ENCODE measurements at regions of chr1 and their contacts with region 1.

Region 1: DNA sequence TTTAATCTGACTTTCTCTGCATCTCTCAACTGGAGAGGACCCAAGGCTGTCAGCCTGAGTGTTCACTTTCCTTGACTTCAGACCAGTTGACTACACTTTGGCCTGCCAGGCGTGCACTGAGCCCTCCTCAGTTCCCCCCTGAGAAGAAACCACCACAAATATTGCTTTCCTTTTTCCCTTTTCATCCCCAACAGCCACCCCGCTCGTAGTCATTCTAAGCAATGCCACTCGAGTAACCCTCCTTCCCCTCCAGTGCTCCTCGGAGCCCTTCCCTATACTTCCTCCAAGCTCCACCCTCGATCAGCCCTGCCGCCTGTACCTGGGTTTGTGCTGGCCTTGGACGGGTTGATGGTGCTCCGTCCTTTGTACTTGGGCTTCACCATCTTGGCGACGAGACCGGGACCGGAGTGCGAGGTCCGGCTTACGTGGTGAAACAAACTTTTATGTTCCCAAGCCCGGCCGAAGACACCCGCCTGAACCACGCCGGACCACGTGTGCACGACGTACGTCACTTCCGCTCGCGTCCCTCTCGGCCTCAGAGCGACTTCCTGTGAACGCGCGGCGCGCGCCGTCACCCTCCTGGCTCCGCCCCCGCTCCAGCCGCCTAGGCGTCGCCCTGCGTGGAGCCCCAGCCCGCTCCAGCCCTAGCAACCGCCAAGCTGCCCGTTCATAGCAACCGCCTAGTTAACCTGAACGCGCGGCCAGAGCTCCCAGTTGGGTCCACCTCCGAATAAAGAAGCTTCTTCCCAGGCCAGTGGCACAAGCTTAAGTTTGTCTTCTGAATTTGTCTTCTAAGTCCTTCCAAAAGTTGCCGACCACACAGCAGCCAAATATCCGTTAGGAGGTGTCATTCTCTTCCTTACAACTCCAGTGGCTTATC is at the start of gene GNL2:
- DNase-seq: peak; percentile 97
- H3K4me3 Mint-ChIP-seq: peak within 1 kb of the TSS; percentile 99
- H3K27ac Mint-ChIP-seq: peak within 1 kb of the TSS; percentile 92
- H3K4me1 Mint-ChIP-seq: peaks cover 22% of the 10 kb centered on the region
- H3K27me3 Mint-ChIP-seq: peaks cover 3% of the 10 kb centered on the region
- total RNA-seq, gene GNL2: 95.6 and 98.0 TPM in 2 replicates

Region 2: DNA sequence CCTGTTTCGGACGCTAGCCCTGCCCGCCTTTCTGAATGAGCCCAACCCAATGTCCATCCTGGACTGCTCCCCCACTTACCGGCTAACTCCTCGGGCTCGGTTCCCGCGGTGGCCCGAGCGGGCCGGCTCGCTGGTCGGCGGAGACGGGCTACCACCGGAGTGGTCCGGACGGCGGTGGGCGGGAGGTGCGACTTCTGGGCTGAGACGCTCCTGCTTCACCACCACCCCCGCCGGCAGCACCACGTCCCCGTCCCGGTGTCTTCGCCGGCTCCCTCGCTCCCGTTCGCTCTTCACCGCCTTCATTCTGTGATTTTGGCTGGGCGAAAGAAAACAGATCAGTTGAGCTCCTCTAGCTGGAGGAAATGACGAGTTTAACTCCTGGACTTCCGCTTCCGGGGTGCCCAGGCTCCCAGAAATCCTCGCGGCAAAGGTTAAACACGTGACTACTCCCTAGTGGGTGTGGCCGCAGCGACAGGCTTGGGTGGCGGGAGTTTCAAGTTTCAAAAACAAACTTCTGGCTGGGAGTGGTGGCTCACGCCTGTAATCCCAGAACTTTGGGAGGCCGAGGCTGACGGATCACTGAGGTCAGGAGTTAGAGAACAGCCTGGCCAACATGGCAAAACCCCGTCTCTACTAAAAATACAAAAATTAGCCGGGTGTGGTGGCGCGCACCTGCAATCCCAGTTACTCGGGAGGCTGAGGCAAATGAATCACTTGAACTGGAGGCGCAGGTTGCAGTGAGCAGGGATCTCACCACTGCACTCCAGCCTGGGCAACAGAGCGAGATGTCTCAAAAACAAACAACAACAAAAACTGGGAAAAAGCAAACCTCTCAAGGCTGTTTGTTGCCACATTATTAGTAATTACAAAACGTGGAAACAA is 41.5 kb before region 1 on chr1 and contains the start of gene SNIP1:
- intact Hi-C with region 1: loop called (anchors 1 kb)
- DNase-seq: peak; percentile 89
- H3K4me3 Mint-ChIP-seq: peak within 1 kb of the TSS; percentile 98
- H3K27ac Mint-ChIP-seq: peak within 1 kb of the TSS; percentile 93
- H3K4me1 Mint-ChIP-seq: peaks cover 41% of the 10 kb centered on the region
- H3K27me3 Mint-ChIP-seq: no peaks in the 10 kb centered on the region
- total RNA-seq, gene SNIP1: 26.1 and 27.8 TPM in 2 replicates

Region 3: DNA sequence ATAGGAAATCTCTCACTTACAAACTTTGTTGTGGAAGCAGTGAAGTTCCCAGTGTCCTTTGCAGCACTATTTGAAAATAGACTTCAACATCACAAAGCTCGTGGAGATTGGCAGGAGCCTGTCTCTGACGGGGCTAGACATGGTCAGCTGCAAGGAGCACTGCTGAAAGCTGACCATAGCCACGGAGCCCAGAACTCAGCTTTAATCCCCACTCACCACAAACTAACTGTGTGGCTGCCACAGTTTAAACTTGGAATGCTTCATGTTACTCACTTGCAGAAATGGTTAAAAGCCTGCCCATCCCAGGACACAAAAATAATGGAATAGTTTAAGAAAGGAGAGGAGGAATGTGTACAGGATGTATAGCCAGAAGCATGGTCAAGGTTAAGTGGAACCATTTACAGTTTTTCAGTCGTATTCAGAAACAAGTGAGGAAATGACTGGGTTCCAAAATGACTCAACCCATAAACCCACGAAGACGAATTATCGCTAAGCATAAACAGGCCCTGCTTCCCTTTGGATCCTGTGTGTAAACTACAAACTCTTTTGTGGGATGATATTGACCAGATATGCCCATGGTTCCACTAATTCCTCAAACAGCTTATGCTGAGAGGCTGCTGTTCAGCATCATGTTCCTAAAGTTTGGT is 20.7 kb before region 1 on chr1:
- intact Hi-C with region 1: loop called (anchors 2 kb)
- DNase-seq: no peak
- H3K4me3 Mint-ChIP-seq: no peak overlapping the region
- H3K27ac Mint-ChIP-seq: peak overlapping the region; percentile 81
- H3K4me1 Mint-ChIP-seq: peaks cover 66% of the 10 kb centered on the region
- H3K27me3 Mint-ChIP-seq: no peaks in the 10 kb centered on the region

Region 4: DNA sequence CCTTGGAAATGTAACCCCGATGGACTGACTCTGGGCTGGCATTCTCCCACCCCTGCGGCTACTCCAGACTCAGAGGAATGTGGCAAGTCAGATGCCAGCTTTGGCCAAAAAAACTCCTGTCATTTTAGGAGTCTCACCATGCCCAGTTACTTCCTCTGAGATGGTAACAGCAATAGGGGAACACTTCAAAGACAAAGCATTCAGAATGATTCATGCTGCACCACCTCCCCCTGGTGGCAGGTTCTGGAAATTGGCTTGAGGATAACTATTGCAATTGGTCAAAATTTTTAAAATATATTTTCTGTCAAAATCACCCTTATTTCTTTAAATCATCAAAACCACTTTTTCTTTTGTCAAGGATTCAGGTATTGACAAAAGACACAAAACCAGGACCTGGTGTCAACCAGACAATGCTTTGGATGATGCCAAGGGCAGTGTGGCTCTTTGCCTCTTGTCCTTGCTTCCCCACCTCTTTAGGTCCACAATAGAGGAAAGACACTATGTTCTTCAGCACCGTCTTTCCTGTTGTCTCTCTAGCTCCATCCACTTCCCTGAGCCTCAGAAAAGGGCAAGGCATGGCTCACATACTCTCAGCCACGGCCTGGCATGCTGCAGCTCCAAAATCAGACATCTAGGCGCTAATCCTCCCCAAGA is 86.8 kb after region 1 on chr1:
- intact Hi-C with region 1: loop called (anchors 1 kb)
- DNase-seq: peak; percentile 56
- H3K4me3 Mint-ChIP-seq: no peak overlapping the region
- H3K27ac Mint-ChIP-seq: no peak overlapping the region
- H3K4me1 Mint-ChIP-seq: peaks cover 3% of the 10 kb centered on the region
- H3K27me3 Mint-ChIP-seq: no peaks in the 10 kb centered on the region

Region 5: DNA sequence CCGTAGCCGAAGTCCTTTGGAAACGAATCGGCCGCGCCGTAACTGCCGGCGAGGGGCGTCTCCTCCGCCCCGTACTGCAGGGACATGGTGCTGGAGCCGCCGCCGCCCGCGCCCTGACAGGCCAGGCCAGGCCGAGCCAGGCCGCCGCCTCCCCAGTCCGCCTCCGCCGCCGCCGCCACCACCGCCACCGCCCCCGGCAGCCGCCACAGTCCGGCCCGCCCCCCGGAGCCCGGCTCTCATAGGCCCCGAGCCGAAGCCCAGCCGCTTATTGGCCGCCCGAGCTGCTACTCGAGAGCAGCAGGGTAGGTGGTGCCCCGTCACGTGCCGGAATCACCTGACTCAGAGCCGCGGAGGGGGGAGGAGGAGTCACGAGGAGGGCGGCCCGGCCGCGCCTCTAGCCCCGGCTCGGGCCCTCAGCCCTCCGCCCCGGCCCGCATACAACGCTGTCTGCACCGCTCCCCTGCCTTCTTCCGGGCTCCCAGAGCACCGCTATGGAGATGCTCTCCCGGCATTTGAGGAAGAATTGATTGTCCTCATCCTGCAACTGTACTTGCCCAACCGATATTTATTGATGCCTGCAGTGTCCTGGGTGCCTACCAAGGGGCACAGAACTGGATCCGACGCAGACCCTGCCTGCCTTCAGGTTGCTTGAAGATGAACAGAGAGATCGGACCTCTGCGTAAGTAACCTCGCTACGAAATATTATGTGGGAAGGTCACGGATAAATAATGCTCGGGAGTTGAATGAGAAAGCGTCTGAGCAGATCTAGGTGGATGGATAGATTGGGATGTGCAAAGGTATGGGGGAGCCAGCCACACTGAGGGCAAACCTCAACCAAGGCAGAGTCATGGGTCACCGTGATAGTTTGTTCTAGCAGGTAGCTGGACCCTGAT is 1264.1 kb after region 1 on chr1 and contains the start of gene RRAGC:
- intact Hi-C with region 1: loop called (anchors 10 kb)
- DNase-seq: peak; percentile 98
- H3K4me3 Mint-ChIP-seq: peak within 1 kb of the TSS; percentile 92
- H3K27ac Mint-ChIP-seq: peak within 1 kb of the TSS; percentile 82
- H3K4me1 Mint-ChIP-seq: peaks cover 23% of the 10 kb centered on the region
- H3K27me3 Mint-ChIP-seq: no peaks in the 10 kb centered on the region
- total RNA-seq, gene RRAGC: 13.3 and 14.2 TPM in 2 replicates

Measured in activated T-helper 2 cell treated with anti-CD3 and anti-CD28 coated beads, Interferon-gamma antibody, Interleukin-2, Interleukin-4, amounts not matched to agents 10 μg/mL and 5 μg/mL and 100 μg/mL, durations not matched to agents 14 hours and 24 hours and 36 hours (primary cell).